MCF 10A (cell line): ENCODE measurements at regions of chr3 and their contacts with region 1.

Region 1: GRCh38 chr3:172461530-172462138 is 13.4 kb upstream of the GHSR start:
- DNase-seq: peak; percentile 59
- H3K4me3 Mint-ChIP-seq: no peak overlapping the region
- H3K27ac Mint-ChIP-seq: no peak overlapping the region
- H3K4me1 Mint-ChIP-seq: peaks cover under 1% of the 10 kb centered on the region
- H3K27me3 Mint-ChIP-seq: no peaks in the 10 kb centered on the region
- CTCF ChIP-seq: peak; percentile 77

Region 2: GRCh38 chr3:172437713-172438112 is 23.9 kb before region 1 on chr3:
- CTCF ChIA-PET with region 1: interaction called, 16 read pairs
- POLR2A ChIA-PET with region 1: interaction called, 3 read pairs
- intact Hi-C with region 1: no loop called
- DNase-seq: no peak
- H3K4me3 Mint-ChIP-seq: no peak overlapping the region
- H3K27ac Mint-ChIP-seq: no peak overlapping the region
- H3K4me1 Mint-ChIP-seq: no peaks in the 10 kb centered on the region
- H3K27me3 Mint-ChIP-seq: no peaks in the 10 kb centered on the region
- CTCF ChIP-seq: no peak